Caco-2 (cell line): ENCODE measurements at regions of chr14 and their contacts with region 1.

Region 1: GRCh38 chr14:37403626-37404025 is 191.4 kb downstream of the FOXA1 start:
- DNase-seq: no peak
- H3K4me3 ChIP-seq: no peak overlapping the region
- H3K4me3 Mint-ChIP-seq: no peak overlapping the region
- H3K27ac Mint-ChIP-seq: no peak overlapping the region
- H3K4me1 ChIP-seq: peaks cover 82% of the 10 kb centered on the region
- H3K4me1 Mint-ChIP-seq: peaks cover 44% of the 10 kb centered on the region
- H3K27me3 ChIP-seq: no peaks in the 10 kb centered on the region
- H3K27me3 Mint-ChIP-seq: no peaks in the 10 kb centered on the region
- CTCF ChIP-seq: no peak

Region 2: GRCh38 chr14:37329189-37330001 is 74.2 kb before region 1 on chr14:
- CTCF ChIA-PET with region 1: no interaction called
- POLR2A ChIA-PET with region 1: no interaction called
- intact Hi-C with region 1: loop called (anchors 1 kb)
- DNase-seq: peak in 1 of 2 experiments; percentile 27
- H3K4me3 ChIP-seq: no peak overlapping the region
- H3K4me3 Mint-ChIP-seq: peak overlapping the region; percentile 56
- H3K27ac Mint-ChIP-seq: peak overlapping the region; percentile 65
- H3K4me1 ChIP-seq: peaks cover 23% of the 10 kb centered on the region
- H3K4me1 Mint-ChIP-seq: peaks cover 15% of the 10 kb centered on the region
- H3K27me3 ChIP-seq: no peaks in the 10 kb centered on the region
- H3K27me3 Mint-ChIP-seq: no peaks in the 10 kb centered on the region
- CTCF ChIP-seq: no peak

Region 3: GRCh38 chr14:37384870-37385596 is 18.6 kb before region 1 on chr14:
- CTCF ChIA-PET with region 1: no interaction called
- POLR2A ChIA-PET with region 1: no interaction called
- intact Hi-C with region 1: loop called (anchors 2 kb)
- DNase-seq: peak; percentile 51 to 71
- H3K4me3 ChIP-seq: peak overlapping the region; percentile 8; the same call in 1 of the 2 replicates
- H3K4me3 Mint-ChIP-seq: peak overlapping the region; percentile 70
- H3K27ac Mint-ChIP-seq: peak overlapping the region; percentile 91
- H3K4me1 ChIP-seq: peaks cover 31% of the 10 kb centered on the region
- H3K4me1 Mint-ChIP-seq: peaks cover 12% of the 10 kb centered on the region
- H3K27me3 ChIP-seq: no peaks in the 10 kb centered on the region
- H3K27me3 Mint-ChIP-seq: no peaks in the 10 kb centered on the region
- CTCF ChIP-seq: no peak